Activated CD8-positive, alpha-beta T cell treated with anti-CD3 and anti-CD28 coated beads, Interleukin-2, amount 10 ng/mL, durations not matched to agents 7 days and 5 days (primary cell): ENCODE measurements at regions of chr12 and their contacts with region 1.

Region 1: DNA sequence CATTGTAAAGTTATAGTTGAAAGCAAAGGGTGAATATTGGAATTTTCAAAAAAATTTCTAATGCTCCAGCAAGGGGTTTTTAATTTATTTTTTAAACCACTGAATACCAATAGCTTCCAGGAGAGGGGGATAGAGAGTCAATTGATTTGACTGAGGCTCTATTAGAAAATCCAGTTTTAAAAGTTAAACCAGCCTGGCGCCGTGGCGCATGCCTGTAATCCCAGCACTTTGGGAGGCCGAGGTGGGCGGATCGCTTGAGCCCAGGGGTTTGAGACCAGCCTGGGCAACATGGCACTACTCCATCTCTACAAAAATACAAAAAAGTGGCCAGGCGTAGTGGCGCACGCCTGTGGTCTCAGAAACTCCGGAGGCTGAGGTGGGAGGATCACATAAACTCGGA is 150.1 kb downstream of the SLC38A4 start:
- DNase-seq: no peak
- ATAC-seq: no peak
- H3K4me3 Mint-ChIP-seq: no peak overlapping the region
- H3K27ac Mint-ChIP-seq: no peak overlapping the region
- H3K4me1 Mint-ChIP-seq: no peaks in the 10 kb centered on the region
- H3K27me3 Mint-ChIP-seq: no peaks in the 10 kb centered on the region

Region 2: GRCh38 chr12:46661110-46661845 is 14.5 kb before region 1 on chr12:
- CTCF ChIA-PET with region 1: interaction called, 11 read pairs
- POLR2A ChIA-PET with region 1: no interaction called
- DNase-seq: peak; percentile 41
- ATAC-seq: peak; percentile 83
- H3K4me3 Mint-ChIP-seq: no peak overlapping the region
- H3K27ac Mint-ChIP-seq: peak overlapping the region; percentile 17
- H3K4me1 Mint-ChIP-seq: peaks cover 41% of the 10 kb centered on the region
- H3K27me3 Mint-ChIP-seq: no peaks in the 10 kb centered on the region

Region 3: DNA sequence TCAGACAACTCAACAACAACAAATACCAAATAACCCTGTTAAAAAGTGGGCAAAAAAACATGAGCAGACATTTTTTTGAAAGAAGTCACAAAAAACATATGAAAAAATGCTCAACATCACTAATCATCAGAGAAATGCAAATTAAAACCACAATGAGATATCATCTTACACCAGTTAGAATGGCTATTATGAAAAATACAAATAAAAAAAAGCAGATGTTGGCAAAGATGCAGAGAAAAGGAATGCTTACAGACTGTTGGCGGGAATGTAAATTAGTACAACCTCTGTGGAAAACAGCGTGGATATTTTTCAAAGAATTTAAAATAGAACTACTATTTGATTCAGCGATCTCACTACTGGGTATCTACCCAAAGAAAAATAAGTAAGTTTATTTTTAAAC is 36.0 kb after region 1 on chr12:
- CTCF ChIA-PET with region 1: no interaction called
- POLR2A ChIA-PET with region 1: no interaction called
- DNase-seq: no peak
- ATAC-seq: no peak
- H3K4me3 Mint-ChIP-seq: no peak overlapping the region
- H3K27ac Mint-ChIP-seq: no peak overlapping the region
- H3K4me1 Mint-ChIP-seq: no peaks in the 10 kb centered on the region
- H3K27me3 Mint-ChIP-seq: peaks cover 2% of the 10 kb centered on the region